HCT116 (cell line): ENCODE measurements at regions of chr1 and their contacts with region 1.

Region 1: DNA sequence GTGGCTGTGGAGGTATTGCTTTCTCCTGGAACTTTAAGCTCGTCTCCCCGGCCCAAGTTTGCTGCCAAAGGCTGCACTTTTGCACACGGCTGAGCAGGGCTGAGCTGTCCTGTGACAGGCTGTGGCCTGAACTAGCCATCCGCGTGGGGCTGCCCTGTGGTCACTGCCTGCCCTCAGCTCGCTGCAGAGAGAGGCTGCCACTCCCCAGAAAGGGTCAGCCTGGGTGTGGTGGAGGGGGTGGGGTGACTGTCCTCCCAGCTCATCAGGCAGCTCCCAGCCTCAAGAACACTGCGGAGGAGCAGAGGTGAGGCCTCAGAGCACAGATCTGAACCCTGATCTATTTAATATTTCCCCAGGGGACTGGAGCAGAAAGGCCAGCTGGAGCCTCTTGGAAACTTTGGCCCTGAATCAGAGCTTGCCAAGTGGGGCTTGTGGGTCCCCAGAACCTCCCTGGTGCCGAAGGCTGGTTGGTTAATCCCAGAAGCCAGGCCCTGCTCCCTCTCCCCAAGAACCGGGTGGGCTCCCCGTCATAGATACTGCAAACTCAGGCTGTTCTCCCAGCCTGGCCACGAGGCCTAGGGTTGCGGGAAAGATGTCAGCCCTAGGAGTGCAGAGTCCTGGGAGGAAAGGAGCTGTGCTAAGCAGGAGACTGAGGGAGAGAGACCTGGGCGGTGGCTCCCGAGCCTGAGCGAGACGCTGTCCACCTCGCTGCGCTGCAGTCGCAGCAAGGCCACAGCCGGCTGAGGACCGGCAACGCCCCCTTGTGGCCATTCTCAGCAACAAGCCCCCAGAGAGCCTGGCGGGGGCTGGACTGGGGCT is 125.1 kb upstream of the IPO9 start:
- DNase-seq: peak; percentile 51
- ATAC-seq: peak; percentile 99
- H3K4me3 ChIP-seq: no peak overlapping the region
- H3K27ac ChIP-seq: no peak overlapping the region
- H3K4me1 ChIP-seq: peaks cover 2 to 4% of the 10 kb centered on the region in 2 experiments; a peak in 1 of 4 replicates
- H3K27me3 ChIP-seq: no peaks in the 10 kb centered on the region
- CTCF ChIP-seq: peak; percentile 93 to 97 (median 96)
- POLR2A ChIP-seq: no peak
- RAD21 ChIP-seq: peak; percentile 99

Region 2: GRCh38 chr1:201792534-201793305 is 88.9 kb after region 1 on chr1:
- CTCF ChIA-PET with region 1: interaction called, 297 read pairs
- POLR2A ChIA-PET with region 1: interaction called, 3 read pairs
- RAD21 ChIA-PET with region 1: interaction called, 28 to 40 read pairs
- intact Hi-C with region 1: loop called (anchors 1 kb)
- DNase-seq: peak; percentile 70
- ATAC-seq: peak; percentile 97
- H3K4me3 ChIP-seq: no peak overlapping the region
- H3K27ac ChIP-seq: no peak overlapping the region
- H3K4me1 ChIP-seq: no peaks in the 10 kb centered on the region
- H3K27me3 ChIP-seq: no peaks in the 10 kb centered on the region
- CTCF ChIP-seq: peak; percentile 97 to 99 (median 98)
- POLR2A ChIP-seq: no peak
- RAD21 ChIP-seq: peak; percentile 99

Region 3: DNA sequence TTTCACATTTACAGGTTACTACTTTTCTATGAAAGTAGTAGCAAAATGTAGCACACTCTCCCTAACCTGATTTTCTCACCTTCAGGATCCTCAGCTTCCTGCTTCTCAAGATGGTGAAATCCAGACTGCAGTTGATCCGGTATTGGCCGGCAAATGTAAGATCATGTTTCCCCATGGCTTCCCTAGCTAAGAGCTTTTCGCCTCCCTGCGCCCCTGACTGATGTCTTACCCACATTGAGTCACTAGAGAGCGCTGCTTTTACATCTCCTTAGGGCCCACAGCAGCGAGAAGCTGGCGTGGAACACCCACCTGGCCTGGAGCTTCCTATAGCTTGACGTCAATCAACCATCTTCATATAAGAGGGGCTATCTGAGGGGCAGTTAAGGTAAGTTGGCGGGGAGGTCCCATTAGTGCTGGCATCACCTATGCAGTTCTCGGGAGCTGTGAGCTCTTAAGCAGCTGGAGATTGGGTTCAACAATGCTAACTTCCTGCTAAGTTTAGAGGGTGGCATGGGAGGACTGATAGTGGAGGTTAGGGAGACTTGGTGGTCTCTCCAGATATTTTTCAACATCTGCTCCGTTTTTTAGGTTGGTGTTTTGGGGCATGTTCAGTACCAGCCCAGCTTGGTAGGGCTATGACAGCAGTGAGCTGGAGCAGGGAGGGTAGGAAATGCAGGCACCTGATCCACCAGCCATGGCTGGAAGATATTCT is 451.1 kb after region 1 on chr1:
- CTCF ChIA-PET with region 1: no interaction called
- POLR2A ChIA-PET with region 1: no interaction called
- RAD21 ChIA-PET with region 1: no interaction called
- intact Hi-C with region 1: no loop called
- DNase-seq: peak; percentile 76
- ATAC-seq: peak; percentile 94
- H3K4me3 ChIP-seq: no peak overlapping the region
- H3K27ac ChIP-seq: no peak overlapping the region
- H3K4me1 ChIP-seq: peaks cover 10 to 16% of the 10 kb centered on the region in 2 experiments; a peak in 3 of 4 replicates
- H3K27me3 ChIP-seq: no peaks in the 10 kb centered on the region
- CTCF ChIP-seq: peak; percentile 53 to 82 (median 70); a peak in 5 of 6 replicates
- POLR2A ChIP-seq: no peak
- RAD21 ChIP-seq: peak; percentile 64